ENCODE measurements at regions of chr3 and their contacts with region 1.

Region 1: DNA sequence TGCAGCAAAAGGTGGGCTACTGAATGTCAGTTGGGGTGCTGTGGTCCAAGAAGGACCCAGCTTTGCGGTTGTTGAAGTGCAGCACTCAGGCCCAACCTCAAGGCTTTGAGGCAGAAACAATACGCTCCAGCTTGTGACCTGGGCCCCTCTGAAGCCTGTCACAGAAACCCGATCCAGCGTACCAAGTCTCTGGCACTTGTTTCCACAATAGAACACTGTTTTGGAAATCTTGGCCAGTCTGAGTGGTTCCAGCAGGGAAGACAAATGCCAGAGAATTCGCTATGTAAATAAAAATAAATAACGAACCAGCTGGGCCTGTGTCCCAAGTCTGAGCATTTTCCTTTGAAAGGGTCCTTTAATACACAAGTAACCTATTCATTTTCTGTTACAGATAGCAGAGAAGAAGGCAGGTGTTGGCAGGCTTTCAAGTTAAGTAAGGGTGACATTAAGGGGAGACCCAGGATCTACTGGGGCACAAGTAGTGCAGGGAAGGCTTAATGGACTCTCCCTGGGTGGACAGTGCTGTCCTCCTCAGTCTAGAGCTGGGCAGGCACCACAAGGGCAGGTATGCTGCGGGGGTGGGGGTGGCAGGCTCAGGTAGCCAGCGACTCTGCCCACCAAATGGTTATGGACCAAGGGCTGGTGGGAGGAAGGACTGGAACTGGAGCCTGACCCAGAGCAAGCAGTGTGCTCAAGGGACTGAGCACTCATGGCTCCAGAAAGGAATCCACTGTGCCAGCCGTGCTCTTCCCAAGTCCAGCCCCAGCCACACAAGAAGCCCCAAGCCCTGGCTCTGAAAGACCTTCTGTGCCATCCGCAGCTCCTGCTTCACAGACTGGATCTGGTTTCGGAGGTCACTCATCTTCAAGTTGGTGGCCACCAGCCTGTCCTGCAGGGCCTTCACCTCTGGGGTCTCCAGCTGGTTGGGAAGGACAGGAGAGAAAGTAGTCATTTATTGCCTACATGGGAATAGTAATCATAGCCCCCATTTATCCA is 26.3 kb downstream of the CCDC13 start:
- DNase-seq: no peak
- H3K4me3 Mint-ChIP-seq: no peak overlapping the region
- H3K27ac Mint-ChIP-seq: peak overlapping the region; percentile 80
- H3K4me1 Mint-ChIP-seq: peaks cover 53% of the 10 kb centered on the region
- H3K27me3 Mint-ChIP-seq: peaks cover 5% of the 10 kb centered on the region

Region 2: DNA sequence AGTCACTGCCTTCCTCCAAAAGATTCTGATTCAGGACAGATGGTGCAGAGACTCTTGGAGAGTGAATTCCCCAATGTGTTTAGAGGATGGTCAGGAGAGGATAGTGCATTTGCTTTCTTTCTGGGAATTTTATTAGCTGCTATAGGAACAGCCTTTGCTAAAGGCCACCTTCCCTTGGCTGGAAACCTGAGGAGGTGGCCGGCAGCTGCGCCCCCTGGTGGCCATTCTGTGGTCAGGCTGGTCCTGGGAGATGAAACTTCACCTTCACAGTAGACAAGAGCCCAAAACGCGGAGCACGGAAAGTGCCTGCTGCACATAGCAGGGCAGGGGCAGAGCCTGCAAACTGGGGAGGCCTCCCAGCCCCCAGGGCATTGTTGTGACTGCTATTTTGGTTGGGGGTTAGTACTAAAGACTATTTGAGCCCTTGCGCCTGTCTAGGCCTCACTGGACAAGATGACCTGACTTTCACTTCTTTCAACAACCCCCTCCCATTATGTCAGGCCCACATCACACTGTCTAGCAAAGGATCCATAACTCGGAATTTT is 199.3 kb before region 1 on chr3:
- CTCF ChIA-PET with region 1: interaction called, 11 read pairs
- DNase-seq: peak; percentile 73
- H3K4me3 Mint-ChIP-seq: no peak overlapping the region
- H3K27ac Mint-ChIP-seq: peak overlapping the region; percentile 16
- H3K4me1 Mint-ChIP-seq: peaks cover 3% of the 10 kb centered on the region
- H3K27me3 Mint-ChIP-seq: no peaks in the 10 kb centered on the region

Region 3: DNA sequence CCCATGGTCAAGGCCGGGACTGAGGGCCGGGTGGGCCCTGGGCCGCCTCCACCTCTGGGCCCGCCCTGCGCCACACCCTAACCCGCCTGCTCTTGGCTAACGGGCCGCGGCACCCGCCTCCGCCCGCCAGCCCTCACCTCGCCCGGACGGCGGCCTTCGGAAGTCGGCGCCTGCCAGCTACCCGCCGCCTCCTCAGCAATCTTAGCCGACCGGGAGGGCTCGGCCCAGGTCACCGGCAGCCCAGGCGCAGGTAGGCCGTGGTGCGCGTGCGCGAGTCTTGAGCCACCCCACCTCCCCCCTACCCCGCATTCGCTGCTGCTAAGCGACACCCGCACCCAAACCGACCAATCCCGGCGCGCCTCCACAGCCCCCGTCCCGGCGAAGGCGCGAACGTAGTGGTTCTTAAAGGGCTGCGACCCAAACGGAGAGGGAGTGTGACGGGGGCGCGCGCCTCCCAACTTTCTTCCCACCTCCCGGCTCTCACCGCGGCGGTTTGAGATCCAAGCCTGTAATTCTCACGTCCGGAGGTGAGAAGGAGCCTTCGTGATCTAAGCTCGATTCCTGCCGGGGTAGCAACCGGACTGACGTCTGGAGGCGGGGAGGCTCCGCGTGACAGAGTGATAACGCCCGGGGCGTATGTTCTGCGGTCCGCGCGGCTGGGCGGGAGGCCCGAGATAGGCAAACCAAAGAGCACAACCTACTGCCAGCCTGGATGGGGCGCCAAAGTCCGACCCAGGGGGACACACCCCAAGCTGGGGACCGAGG is 164.9 kb before region 1 on chr3 and contains the start of gene SEC22C:
- CTCF ChIA-PET with region 1: interaction called, 22 read pairs
- DNase-seq: peak; percentile 97
- H3K4me3 Mint-ChIP-seq: peak within 1 kb of the TSS; percentile 83
- H3K27ac Mint-ChIP-seq: peak within 1 kb of the TSS; percentile 96
- H3K4me1 Mint-ChIP-seq: peaks cover 60% of the 10 kb centered on the region
- H3K27me3 Mint-ChIP-seq: no peaks in the 10 kb centered on the region